Left cardiac atrium (tissue), 4 donors: ENCODE measurements at regions of chr5 and their contacts with region 1.

Region 1: GRCh38 chr5:10627160-10627701 is 63.4 kb downstream of the ANKRD33B start:
- DNase-seq: no peak
- ATAC-seq: peak; percentile 9 to 28

Region 2: GRCh38 chr5:10452768-10453331 is 174.4 kb before region 1 on chr5:
- intact Hi-C with region 1: loop called (anchors 1 to 2 kb)
- DNase-seq: no peak
- ATAC-seq: peak; percentile 77 to 83

Region 3: GRCh38 chr5:10838038-10838437 is 210.8 kb after region 1 on chr5:
- intact Hi-C with region 1: no loop called
- DNase-seq: no peak
- ATAC-seq: no peak